GM12878 (cell line): ENCODE measurements at regions of chr7 and their contacts with region 1.

Region 1: DNA sequence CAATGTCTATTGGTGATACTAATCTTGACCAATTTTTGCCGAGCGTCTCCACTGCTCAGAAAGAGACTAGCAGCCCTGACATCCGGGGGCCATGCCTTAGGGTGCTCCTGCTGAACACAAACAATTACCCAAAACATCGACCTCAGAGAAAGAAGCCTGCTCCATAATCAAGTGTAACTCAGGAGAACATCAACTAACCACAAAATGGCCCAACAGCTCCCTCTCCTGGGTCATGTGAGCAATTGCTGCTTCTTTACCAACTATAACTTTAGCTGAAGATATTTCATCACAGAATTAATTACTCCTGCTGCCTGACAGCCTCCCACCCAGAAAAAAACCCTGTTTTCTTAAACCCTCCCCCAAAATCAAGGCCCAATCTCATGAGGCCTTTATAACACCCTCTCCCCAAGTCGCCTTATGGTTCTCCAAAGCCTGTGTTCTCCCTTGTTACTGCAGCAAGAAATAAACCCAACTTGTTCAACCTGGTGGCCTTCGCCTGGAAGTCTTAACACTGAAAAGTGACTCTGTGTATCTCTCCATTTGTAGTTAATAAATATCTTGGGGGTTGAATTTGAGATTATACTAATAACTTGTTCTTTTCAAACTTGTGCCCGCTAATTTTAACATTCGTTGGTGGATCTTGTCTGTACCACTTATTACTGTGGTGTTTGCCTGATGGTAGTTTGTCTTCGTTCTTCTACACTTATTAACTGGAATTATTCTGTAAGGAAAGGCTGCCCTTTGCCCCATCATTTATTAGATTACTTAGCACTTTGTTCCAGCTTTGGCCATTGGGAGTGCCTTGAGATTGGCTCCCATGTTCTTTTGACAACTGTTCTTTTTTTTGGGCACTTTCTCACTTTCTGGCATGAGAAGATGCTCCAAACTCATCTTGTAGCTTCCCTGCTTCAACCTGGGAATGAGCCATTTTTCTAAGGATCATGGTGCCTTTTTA is 21.2 kb upstream of the RAMP3 start:
- DNase-seq: peak; percentile 41
- ATAC-seq: peak; percentile 86
- H3K4me3 ChIP-seq: no peak overlapping the region
- H3K27ac ChIP-seq: no peak overlapping the region
- H3K4me1 ChIP-seq: peaks cover 4% of the 10 kb centered on the region; the same call in 1 of the 2 replicates
- H3K27me3 ChIP-seq: no peaks in the 10 kb centered on the region
- CTCF ChIP-seq: peak; percentile 81 to 94 (median 84)
- EP300 ChIP-seq: no peak
- POLR2A ChIP-seq: no peak
- RAD21 ChIP-seq: peak; percentile 97

Region 2: GRCh38 chr7:44587843-44588711 is 548.3 kb before region 1 on chr7:
- CTCF ChIA-PET with region 1: interaction called, 8 read pairs
- POLR2A ChIA-PET with region 1: no interaction called
- RAD21 ChIA-PET with region 1: interaction called, 4 read pairs
- SMC1A ChIA-PET with region 1: interaction called, 6 read pairs
- in situ Hi-C with region 1: loop called (anchors 5 kb)
- intact Hi-C with region 1: loop called (anchors 2 kb)
- DNase-seq: peak; percentile 53
- ATAC-seq: peak; percentile 95
- H3K4me3 ChIP-seq: no peak overlapping the region
- H3K27ac ChIP-seq: no peak overlapping the region
- H3K4me1 ChIP-seq: peaks cover 5% of the 10 kb centered on the region
- H3K27me3 ChIP-seq: no peaks in the 10 kb centered on the region
- CTCF ChIP-seq: peak; percentile 62 to 77 (median 64); a peak in 5 of 6 replicates
- EP300 ChIP-seq: no peak
- POLR2A ChIP-seq: no peak
- RAD21 ChIP-seq: peak; percentile 94

Region 3: DNA sequence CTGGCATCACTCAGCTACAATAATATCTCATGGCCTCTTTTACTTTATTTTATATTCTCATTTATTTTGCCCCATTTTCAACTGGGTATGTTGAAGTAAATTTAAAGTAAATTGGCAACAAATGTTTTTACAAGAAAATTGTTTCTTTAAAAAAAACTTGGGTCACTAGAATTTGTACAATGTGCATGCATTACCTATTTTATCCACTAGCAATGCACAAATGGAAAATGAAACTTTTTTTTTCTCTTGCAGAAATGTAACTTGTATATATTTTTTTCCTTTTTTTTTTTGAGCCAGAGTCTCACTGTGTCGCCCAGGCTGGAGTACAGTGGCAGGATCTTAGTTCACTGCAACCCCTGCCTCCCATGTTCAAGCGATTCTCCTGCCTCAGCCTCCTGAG is 278.2 kb before region 1 on chr7:
- CTCF ChIA-PET with region 1: interaction called, 145 read pairs
- POLR2A ChIA-PET with region 1: no interaction called
- RAD21 ChIA-PET with region 1: interaction called, 73 read pairs
- SMC1A ChIA-PET with region 1: interaction called, 89 read pairs
- in situ Hi-C with region 1: loop called (anchors 5 kb)
- intact Hi-C with region 1: loop called (anchors 1 kb)
- DNase-seq: no peak
- ATAC-seq: no peak; the same call in 2 of the 3 replicates
- H3K4me3 ChIP-seq: no peak overlapping the region
- H3K27ac ChIP-seq: no peak overlapping the region
- H3K4me1 ChIP-seq: no peaks in the 10 kb centered on the region
- H3K27me3 ChIP-seq: no peaks in the 10 kb centered on the region
- CTCF ChIP-seq: 0 out of 6 replicates have a peak, but pooled peaks of 1 of the 3 experiments have one; percentile 8
- EP300 ChIP-seq: no peak
- POLR2A ChIP-seq: no peak
- RAD21 ChIP-seq: no peak

Region 4: GRCh38 chr7:44885394-44886317 is 250.7 kb before region 1 on chr7 and contains the start of gene PURB:
- CTCF ChIA-PET with region 1: interaction called, 4 read pairs
- POLR2A ChIA-PET with region 1: interaction called, 4 read pairs
- RAD21 ChIA-PET with region 1: interaction called, 10 read pairs
- SMC1A ChIA-PET with region 1: interaction called, 24 read pairs
- in situ Hi-C with region 1: no loop called
- intact Hi-C with region 1: no loop called
- DNase-seq: peak; percentile 79
- ATAC-seq: peak; percentile 88
- H3K4me3 ChIP-seq: peak within 1 kb of the TSS; percentile 99
- H3K27ac ChIP-seq: peak within 1 kb of the TSS; percentile 99
- H3K4me1 ChIP-seq: 0 out of 2 replicates have a peak, but pooled peaks cover 3% of the 10 kb centered on the region
- H3K27me3 ChIP-seq: no peaks in the 10 kb centered on the region
- CTCF ChIP-seq: no peak; a peak in 1 of 6 replicates
- EP300 ChIP-seq: peak; percentile 62 to 64; a peak in 3 of 4 replicates
- POLR2A ChIP-seq: peak; percentile 91
- RAD21 ChIP-seq: no peak
- polyA plus RNA-seq, gene PURB: 2.5 to 2.8 TPM

Region 5: GRCh38 chr7:44973610-44974401 is 162.6 kb before region 1 on chr7:
- CTCF ChIA-PET with region 1: interaction called, 219 read pairs
- POLR2A ChIA-PET with region 1: interaction called, 5 read pairs
- RAD21 ChIA-PET with region 1: interaction called, 121 read pairs
- SMC1A ChIA-PET with region 1: interaction called, 105 read pairs
- in situ Hi-C with region 1: loop called (anchors 10 kb)
- intact Hi-C with region 1: loop called (anchors 1 kb)
- DNase-seq: no peak
- ATAC-seq: peak; percentile 56
- H3K4me3 ChIP-seq: no peak overlapping the region
- H3K27ac ChIP-seq: no peak overlapping the region
- H3K4me1 ChIP-seq: peaks cover 24% of the 10 kb centered on the region
- H3K27me3 ChIP-seq: no peaks in the 10 kb centered on the region
- CTCF ChIP-seq: peak; percentile 56 to 77 (median 62)
- EP300 ChIP-seq: no peak
- POLR2A ChIP-seq: no peak
- RAD21 ChIP-seq: peak; percentile 58

Region 6: DNA sequence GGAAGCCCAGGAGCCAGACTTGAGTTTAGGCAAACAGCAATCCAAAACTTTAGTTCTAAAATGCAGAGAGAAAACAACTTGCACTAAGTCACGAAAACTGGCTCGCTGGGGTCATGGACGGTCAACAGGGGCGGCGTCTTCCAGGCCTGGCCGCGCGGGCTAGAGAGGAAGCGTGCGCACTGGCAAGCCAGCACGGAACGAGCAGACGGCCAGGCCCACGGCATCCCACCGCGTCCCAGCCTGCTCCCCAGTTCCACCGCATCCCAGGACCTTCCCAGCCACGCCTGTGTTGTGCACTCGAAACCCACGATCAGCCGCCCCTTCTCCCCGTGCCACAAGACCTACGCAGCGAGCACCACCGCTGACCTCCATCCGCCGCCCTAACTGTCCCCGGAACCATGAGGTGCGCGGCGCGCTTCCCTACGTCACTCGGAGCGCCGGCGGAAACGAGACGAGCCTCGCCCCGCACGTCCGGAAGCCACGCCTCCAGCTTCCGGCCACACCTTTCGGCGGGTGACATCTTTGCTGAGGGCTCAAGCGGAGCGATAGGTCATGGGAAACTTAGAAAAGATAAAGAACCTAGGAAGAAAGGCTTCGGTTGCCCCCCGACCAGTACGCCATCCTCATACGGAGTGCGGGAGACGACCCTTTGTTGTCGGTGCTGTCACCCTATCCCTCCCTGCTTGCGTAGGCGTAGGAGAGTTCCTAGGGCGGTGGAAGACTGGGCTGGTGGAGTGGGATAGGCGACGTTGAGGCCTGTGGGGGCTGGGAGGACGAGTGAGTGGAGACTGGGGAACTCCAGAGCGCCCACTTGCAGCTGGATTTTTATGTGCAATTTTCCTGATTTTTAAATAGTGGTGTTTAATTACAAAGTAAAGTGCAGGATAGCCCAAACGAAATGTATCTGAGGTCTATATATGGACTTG is 24.8 kb before region 1 on chr7 and contains the start of gene TBRG4:
- CTCF ChIA-PET with region 1: interaction called, 23 read pairs
- POLR2A ChIA-PET with region 1: no interaction called
- RAD21 ChIA-PET with region 1: interaction called, 20 read pairs
- SMC1A ChIA-PET with region 1: interaction called, 17 read pairs
- in situ Hi-C with region 1: no loop called
- intact Hi-C with region 1: no loop called
- DNase-seq: peak; percentile 85
- ATAC-seq: peak; percentile 94
- H3K4me3 ChIP-seq: peak within 1 kb of the TSS; percentile 90
- H3K27ac ChIP-seq: peak within 1 kb of the TSS; percentile 83
- H3K4me1 ChIP-seq: peaks cover 7% of the 10 kb centered on the region
- H3K27me3 ChIP-seq: no peaks in the 10 kb centered on the region
- CTCF ChIP-seq: peak; percentile 11 to 22 (median 16); a peak in 4 of 6 replicates
- EP300 ChIP-seq: peak; percentile 12 to 57; a peak in 2 of 4 replicates
- POLR2A ChIP-seq: peak; percentile 100
- RAD21 ChIP-seq: no peak
- polyA plus RNA-seq, gene TBRG4: 8.4 to 13.3 TPM

Region 7: GRCh38 chr7:45160417-45160881 is 24.1 kb after region 1 on chr7:
- CTCF ChIA-PET with region 1: no interaction called
- POLR2A ChIA-PET with region 1: no interaction called
- RAD21 ChIA-PET with region 1: no interaction called
- SMC1A ChIA-PET with region 1: no interaction called
- in situ Hi-C with region 1: no loop called
- intact Hi-C with region 1: no loop called
- DNase-seq: peak; percentile 9
- ATAC-seq: peak; percentile 80
- H3K4me3 ChIP-seq: no peak overlapping the region
- H3K27ac ChIP-seq: no peak overlapping the region
- H3K4me1 ChIP-seq: peaks cover 7% of the 10 kb centered on the region
- H3K27me3 ChIP-seq: peaks cover 3 to 5% of the 10 kb centered on the region in 2 experiments; a peak in 2 of 4 replicates
- CTCF ChIP-seq: no peak
- EP300 ChIP-seq: no peak
- POLR2A ChIP-seq: no peak
- RAD21 ChIP-seq: no peak